ENCODE measurements at regions of chr13 and their contacts with region 1.

Region 1: GRCh38 chr13:100721885-100722512 is 47.4 kb upstream of the TMTC4 start:
- DNase-seq: peak; percentile 62
- H3K4me3 Mint-ChIP-seq: no peak overlapping the region
- H3K27ac Mint-ChIP-seq: no peak overlapping the region
- H3K4me1 Mint-ChIP-seq: no peaks in the 10 kb centered on the region
- H3K27me3 Mint-ChIP-seq: peaks cover 3% of the 10 kb centered on the region

Region 2: GRCh38 chr13:101127741-101128353 is 405.8 kb after region 1 on chr13:
- CTCF ChIA-PET with region 1: interaction called, 9 read pairs
- POLR2A ChIA-PET with region 1: no interaction called
- intact Hi-C with region 1: loop called (anchors 1 kb)
- DNase-seq: peak; percentile 17
- H3K4me3 Mint-ChIP-seq: no peak overlapping the region
- H3K27ac Mint-ChIP-seq: no peak overlapping the region
- H3K4me1 Mint-ChIP-seq: peaks cover 2% of the 10 kb centered on the region
- H3K27me3 Mint-ChIP-seq: peaks cover 4% of the 10 kb centered on the region

Measured in activated CD4-positive, alpha-beta memory T cell treated with anti-CD3 and anti-CD28 coated beads for 36 hours (primary cell).